B cell (primary cell): ENCODE measurements at regions of chr7 and their contacts with region 1.

Region 1: DNA sequence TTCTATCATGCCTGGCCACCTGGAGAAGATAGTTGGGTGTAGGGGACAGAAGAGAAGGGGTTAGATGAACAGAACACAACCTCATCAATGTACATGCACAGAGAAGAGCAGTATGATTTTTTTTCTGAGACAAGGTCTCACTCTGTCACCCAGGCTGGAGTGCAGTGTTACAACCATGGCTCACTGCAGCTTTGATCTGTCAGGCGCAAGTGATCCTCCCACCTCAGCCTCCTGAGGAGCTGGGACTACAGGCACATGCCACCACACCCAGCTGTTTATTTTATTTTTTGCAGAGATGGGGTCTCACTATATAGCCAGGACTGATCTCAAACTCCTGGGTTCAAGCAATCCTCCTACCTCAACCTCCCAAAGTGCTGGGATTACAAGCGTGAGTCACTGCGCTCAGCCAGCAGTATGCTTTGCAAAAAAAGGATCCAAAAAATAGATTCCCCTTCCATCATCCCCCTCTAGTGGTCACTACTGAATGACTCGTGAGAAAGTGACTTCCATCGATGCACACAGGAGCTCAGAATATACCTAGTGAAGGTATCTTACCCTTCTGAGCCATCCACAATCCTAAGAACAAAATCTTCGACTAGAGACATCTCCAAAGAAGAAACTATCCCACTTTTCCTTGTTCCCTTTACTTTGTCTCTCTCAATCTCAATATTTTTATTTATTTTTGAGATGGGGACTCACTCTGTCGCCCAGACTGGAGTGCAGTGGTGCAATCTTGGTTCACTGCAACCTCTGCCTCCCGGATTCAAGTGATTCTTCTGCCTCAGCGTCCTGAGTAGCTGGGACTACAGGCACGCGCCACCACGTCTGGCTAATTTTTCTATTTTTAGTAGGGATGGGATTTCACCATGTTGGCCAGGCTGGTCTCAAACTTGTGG is 21.0 kb downstream of the ZCWPW1 start:
- DNase-seq: peak; percentile 86
- ATAC-seq: peak; percentile 92
- H3K4me3 ChIP-seq: no peak overlapping the region
- H3K4me3 Mint-ChIP-seq: no peak overlapping the region
- H3K27ac ChIP-seq: no peak overlapping the region
- H3K27ac Mint-ChIP-seq: no peak overlapping the region
- H3K4me1 ChIP-seq: peaks cover 15 to 20% of the 10 kb centered on the region in 2 donors
- H3K4me1 Mint-ChIP-seq: peaks cover 9% of the 10 kb centered on the region
- H3K27me3 ChIP-seq: no peaks in the 10 kb centered on the region
- H3K27me3 Mint-ChIP-seq: no peaks in the 10 kb centered on the region
- CTCF ChIP-seq: peak; percentile 81

Region 2: GRCh38 chr7:100137851-100138760 is 269.4 kb before region 1 on chr7:
- CTCF ChIA-PET with region 1: interaction called, 62 read pairs
- POLR2A ChIA-PET with region 1: no interaction called
- intact Hi-C with region 1: no loop called
- DNase-seq: peak; percentile 55
- ATAC-seq: peak; percentile 61
- H3K4me3 ChIP-seq: peak overlapping the region in 2 of 5 experiments; percentile 15 to 20
- H3K4me3 Mint-ChIP-seq: peak overlapping the region; percentile 72
- H3K27ac ChIP-seq: peak overlapping the region in 1 of 2 donors; percentile 63
- H3K27ac Mint-ChIP-seq: peak overlapping the region; percentile 88
- H3K4me1 ChIP-seq: peaks cover 10 to 25% of the 10 kb centered on the region in 2 donors
- H3K4me1 Mint-ChIP-seq: peaks cover 18% of the 10 kb centered on the region
- H3K27me3 ChIP-seq: no peaks in the 10 kb centered on the region
- H3K27me3 Mint-ChIP-seq: no peaks in the 10 kb centered on the region
- CTCF ChIP-seq: no peak

Region 3: DNA sequence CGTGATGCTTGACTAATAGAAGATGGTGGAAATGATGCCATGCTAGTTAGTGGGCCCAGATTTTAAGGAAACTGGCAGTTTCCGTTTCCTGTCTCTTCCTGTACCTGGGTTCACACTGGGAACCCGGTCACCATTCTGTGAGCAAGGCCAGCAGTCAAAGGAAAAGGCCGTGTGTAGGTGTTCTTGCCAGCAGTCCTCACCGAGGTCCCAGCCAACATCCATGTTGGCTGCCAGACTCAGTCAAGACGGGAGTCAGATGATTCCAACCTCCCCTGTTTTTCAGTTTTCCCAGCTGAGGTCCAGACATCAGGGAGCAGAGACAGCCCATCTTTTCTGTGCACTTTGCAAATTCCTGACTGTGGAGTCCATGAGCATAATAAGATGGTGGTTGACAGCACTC is 64.8 kb before region 1 on chr7:
- CTCF ChIA-PET with region 1: interaction called, 28 read pairs
- POLR2A ChIA-PET with region 1: no interaction called
- intact Hi-C with region 1: no loop called
- DNase-seq: peak; percentile 9
- ATAC-seq: no peak
- H3K4me3 ChIP-seq: no peak overlapping the region
- H3K4me3 Mint-ChIP-seq: peak overlapping the region; percentile 41
- H3K27ac ChIP-seq: peak overlapping the region in 1 of 2 donors; percentile 63
- H3K27ac Mint-ChIP-seq: peak overlapping the region; percentile 87
- H3K4me1 ChIP-seq: peaks cover 18 to 29% of the 10 kb centered on the region in 2 donors
- H3K4me1 Mint-ChIP-seq: peaks cover 45% of the 10 kb centered on the region
- H3K27me3 ChIP-seq: no peaks in the 10 kb centered on the region
- H3K27me3 Mint-ChIP-seq: no peaks in the 10 kb centered on the region
- CTCF ChIP-seq: no peak

Region 4: DNA sequence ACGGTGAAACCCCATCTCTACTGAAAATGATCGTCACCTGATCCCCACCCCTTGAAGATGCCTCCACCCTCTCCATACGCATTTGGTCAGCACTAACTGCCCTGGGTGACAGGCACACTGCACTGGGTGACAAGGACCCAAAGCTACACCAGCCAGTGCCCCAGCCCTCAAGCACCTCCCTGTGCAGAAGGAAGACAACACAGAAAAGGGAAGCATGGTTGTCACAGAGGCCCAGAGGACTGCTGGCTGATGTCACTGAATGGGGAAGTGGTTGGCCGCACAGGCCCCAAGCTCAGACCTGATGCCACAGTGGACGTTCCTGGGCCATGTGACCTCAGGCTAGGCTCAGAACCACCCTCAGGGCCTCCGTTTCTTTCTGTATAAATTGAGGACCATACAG is 38.4 kb before region 1 on chr7:
- CTCF ChIA-PET with region 1: interaction called, 49 read pairs
- POLR2A ChIA-PET with region 1: interaction called, 9 read pairs
- intact Hi-C with region 1: loop called (anchors 1 kb)
- DNase-seq: peak; percentile 95
- ATAC-seq: peak; percentile 84
- H3K4me3 ChIP-seq: no peak overlapping the region
- H3K4me3 Mint-ChIP-seq: peak overlapping the region; percentile 87
- H3K27ac ChIP-seq: peak overlapping the region; percentile 97 to 99
- H3K27ac Mint-ChIP-seq: peak overlapping the region; percentile 99
- H3K4me1 ChIP-seq: peaks cover 68 to 86% of the 10 kb centered on the region in 2 donors
- H3K4me1 Mint-ChIP-seq: peaks cover 81% of the 10 kb centered on the region
- H3K27me3 ChIP-seq: no peaks in the 10 kb centered on the region
- H3K27me3 Mint-ChIP-seq: no peaks in the 10 kb centered on the region
- CTCF ChIP-seq: no peak

Region 5: GRCh38 chr7:100396421-100396982 is 11.0 kb before region 1 on chr7:
- CTCF ChIA-PET with region 1: interaction called, 24 read pairs
- POLR2A ChIA-PET with region 1: interaction called, 4 read pairs
- intact Hi-C with region 1: no loop called
- DNase-seq: peak; percentile 86
- ATAC-seq: peak; percentile 90
- H3K4me3 ChIP-seq: peak overlapping the region in 3 of 5 experiments; percentile 1 to 37 (median 8)
- H3K4me3 Mint-ChIP-seq: peak overlapping the region; percentile 74
- H3K27ac ChIP-seq: peak overlapping the region; percentile 67 to 82
- H3K27ac Mint-ChIP-seq: peak overlapping the region; percentile 93
- H3K4me1 ChIP-seq: peaks cover 30 to 41% of the 10 kb centered on the region in 2 donors
- H3K4me1 Mint-ChIP-seq: peaks cover 49% of the 10 kb centered on the region
- H3K27me3 ChIP-seq: no peaks in the 10 kb centered on the region
- H3K27me3 Mint-ChIP-seq: no peaks in the 10 kb centered on the region
- CTCF ChIP-seq: no peak